GM13977 (cell line): ENCODE measurements at regions of chr6 and their contacts with region 1.

Region 1: DNA sequence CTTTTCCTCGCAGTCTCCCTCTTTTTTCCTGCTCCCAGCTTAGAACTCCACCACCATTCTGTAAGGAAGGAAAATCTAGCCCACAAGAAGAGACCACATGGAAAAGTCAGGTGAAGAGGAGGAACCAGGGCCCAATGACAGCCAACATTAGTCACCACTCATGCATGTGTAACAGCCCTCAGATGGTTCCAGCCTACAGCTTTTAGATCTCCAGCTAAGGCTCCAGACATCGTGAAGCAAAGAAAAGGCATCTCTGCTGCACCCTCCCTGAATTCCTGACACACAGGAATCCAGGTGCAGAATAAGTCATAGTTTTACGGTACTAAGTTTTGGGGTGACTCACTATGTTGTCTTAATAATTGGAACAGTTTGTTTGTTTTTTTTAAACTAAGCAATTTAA is 25.6 kb downstream of the DCDC2 start:
- DNase-seq: no peak
- CTCF ChIP-seq: no peak

Region 2: DNA sequence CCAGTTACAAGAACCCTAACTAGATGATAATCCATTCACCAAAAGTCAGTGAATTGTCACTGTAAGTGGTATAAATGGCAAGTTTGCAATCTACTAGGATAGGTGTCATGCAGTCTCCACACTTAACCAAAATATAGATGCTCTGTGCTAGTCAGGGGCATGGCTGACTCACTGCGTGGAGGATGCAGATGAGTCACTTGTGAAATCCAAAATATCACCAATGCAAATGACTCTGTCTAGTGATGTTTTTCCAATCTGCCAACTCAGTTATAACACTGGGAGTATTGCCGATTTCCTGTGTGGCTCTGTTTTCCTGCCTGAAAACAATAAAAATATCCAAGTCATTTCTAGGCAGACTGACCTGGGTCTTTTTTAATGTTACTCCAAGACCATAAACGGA is 254.1 kb before region 1 on chr6:
- in situ Hi-C with region 1: no loop called
- DNase-seq: no peak
- CTCF ChIP-seq: no peak

Region 3: DNA sequence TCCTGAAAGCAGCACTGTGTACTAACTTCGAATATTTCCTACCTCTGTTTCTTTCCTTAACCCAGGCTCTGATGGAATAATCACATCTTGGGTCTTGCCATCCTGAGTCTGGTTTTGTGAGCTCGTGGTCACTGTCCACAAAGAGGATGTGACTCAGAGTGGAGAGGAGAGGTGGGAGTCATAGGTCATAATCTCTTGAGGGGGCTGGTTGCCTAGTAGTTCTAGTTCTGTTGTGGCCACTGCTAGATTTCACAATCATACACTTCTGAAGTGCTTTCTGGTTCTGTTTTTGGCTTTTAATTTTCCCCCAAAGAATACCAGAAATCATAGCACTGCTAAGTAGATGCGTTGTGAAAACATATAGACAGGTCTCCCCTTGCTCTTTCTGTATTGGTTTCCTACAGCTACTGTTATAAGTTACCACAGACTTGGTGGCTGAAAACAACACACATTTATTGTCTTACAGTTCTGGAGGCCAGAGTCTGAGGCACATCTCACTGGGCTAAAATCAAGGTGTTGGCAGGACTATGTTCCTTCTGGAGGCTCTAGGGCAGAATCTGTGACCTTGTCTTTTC is 103.5 kb before region 1 on chr6:
- in situ Hi-C with region 1: loop called (anchors 25 kb)
- DNase-seq: no peak
- CTCF ChIP-seq: no peak

Region 4: DNA sequence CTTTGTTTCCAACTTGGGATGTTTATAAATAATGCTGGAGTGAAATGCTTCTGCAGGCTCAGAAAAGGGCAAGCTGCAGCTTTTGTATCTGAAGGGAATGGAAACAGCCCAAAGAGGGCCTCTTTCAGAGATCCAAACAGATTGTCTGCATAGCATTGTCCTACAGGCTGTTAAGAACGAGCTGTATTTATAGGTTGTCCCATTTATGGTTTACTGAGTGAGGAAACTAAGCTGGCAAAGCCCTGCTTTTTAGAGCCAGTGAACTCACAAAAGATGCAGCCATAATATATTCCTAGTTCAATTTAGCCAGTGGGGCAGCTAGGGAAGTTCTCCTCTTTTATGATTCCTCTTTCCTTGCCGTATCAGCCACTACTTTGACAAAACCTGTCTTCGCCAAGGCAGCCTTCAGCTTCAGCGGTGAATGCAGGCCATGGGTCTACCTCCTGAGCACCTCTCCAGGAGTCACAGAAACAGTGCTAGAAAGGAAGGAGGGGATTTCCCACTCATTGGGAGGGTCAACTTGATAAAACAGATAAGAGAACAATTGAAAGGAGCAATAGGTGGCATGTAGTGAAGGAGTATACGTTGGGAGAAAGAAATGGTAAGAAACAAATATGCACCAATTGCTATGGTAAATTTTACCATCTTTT is 298.7 kb after region 1 on chr6:
- in situ Hi-C with region 1: no loop called
- DNase-seq: no peak
- CTCF ChIP-seq: no peak